Caco-2 (cell line): ENCODE measurements at regions of chr19 and their contacts with region 1.

Region 1: DNA sequence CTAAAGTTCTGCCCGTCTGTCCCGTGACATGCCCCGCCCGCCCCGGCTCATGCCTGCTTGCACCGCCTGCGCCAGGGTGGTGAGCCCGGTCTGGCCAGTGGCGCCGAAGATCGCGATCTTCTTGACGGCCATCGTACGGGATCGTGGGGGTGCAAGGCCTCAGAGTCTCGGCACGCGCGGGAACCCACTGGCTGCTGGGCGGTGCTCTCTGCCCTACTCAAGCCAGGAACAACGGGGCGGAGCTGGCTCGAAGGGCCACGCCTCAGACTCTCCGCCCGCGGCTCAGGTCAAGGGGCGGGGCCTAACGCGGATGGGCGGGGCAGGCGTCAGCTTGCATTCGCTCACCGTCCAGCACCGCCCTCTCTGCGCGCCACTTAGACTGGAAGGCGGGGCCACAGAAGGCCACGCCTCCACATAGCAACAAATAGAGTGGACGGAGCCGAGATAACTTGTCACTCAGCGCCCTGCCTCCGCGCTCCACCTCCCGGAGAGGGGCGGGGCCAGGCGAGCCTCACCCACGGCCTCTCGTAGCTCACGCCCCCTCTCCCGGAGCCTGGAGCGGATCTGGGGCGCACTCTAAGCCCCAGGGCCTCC is at the start of gene BLVRB:
- DNase-seq: peak; percentile 99 to 100
- H3K4me3 ChIP-seq: peak within 1 kb of the TSS; percentile 73
- H3K4me3 Mint-ChIP-seq: peak within 1 kb of the TSS; percentile 79
- H3K27ac Mint-ChIP-seq: peak within 1 kb of the TSS; percentile 92
- H3K4me1 ChIP-seq: peaks cover 20% of the 10 kb centered on the region
- H3K4me1 Mint-ChIP-seq: peaks cover 20% of the 10 kb centered on the region
- H3K27me3 ChIP-seq: no peaks in the 10 kb centered on the region
- H3K27me3 Mint-ChIP-seq: peaks cover 4% of the 10 kb centered on the region
- CTCF ChIP-seq: no peak
- total RNA-seq, gene BLVRB: 75.2 and 101 TPM in 2 replicates

Region 2: DNA sequence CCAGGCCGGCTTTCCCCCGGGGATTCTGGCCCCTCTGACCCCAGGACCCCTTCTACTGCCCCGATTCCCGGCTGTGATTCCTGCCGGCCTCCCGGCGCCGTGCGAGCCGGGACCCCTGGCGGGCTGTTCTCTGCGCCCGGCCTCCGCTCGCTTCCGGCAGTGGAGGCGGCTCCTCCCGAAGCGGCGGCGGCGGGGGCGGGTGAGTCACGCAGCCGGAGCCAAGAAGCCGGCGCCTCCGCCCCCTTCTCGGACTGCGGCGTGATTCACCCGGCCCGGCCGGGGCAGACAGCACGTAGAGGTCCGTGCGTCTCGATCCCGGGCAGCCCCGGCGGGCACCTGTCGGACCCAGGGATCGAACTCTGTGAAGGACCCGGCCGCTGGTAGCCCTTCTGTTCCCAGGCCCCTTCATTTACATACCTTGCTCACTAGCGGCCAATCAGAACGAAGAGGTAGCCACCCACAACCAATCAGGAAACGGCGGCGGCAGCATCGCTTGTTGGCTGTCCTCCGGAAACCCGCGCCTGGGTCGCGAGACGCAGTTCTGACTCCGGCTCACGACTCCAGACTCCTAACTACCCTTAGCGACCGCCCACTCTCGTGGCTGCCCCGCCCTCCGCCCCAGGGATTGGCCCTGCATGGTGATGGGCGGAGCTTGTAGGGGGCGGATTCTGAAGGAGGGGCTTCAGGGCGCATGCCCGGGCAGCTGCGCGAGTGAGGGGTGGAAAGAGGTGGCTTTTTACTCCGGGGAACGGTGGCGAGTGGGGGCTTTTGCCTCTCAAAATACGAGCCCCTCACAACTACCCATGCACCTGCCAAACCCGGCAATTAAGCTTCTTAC is 40.0 kb before region 1 on chr19 and contains the start of gene SERTAD1:
- CTCF ChIA-PET with region 1: interaction called, 24 read pairs
- POLR2A ChIA-PET with region 1: interaction called, 17 read pairs
- intact Hi-C with region 1: loop called (anchors 1 kb)
- DNase-seq: peak; percentile 100
- H3K4me3 ChIP-seq: peak within 1 kb of the TSS; percentile 46
- H3K4me3 Mint-ChIP-seq: peak within 1 kb of the TSS; percentile 93
- H3K27ac Mint-ChIP-seq: peak within 1 kb of the TSS; percentile 90
- H3K4me1 ChIP-seq: no peaks in the 10 kb centered on the region
- H3K4me1 Mint-ChIP-seq: peaks cover 8% of the 10 kb centered on the region
- H3K27me3 ChIP-seq: no peaks in the 10 kb centered on the region
- H3K27me3 Mint-ChIP-seq: no peaks in the 10 kb centered on the region
- CTCF ChIP-seq: peak; percentile 91 to 95
- total RNA-seq, gene SERTAD1: 7.7 and 8.6 TPM in 2 replicates

Region 3: GRCh38 chr19:40452016-40452415 is 13.6 kb before region 1 on chr19:
- CTCF ChIA-PET with region 1: interaction called, 34 read pairs
- POLR2A ChIA-PET with region 1: interaction called, 26 read pairs
- intact Hi-C with region 1: loop called (anchors 1 kb)
- DNase-seq: no peak
- H3K4me3 ChIP-seq: no peak overlapping the region
- H3K4me3 Mint-ChIP-seq: no peak overlapping the region
- H3K27ac Mint-ChIP-seq: peak overlapping the region; percentile 84
- H3K4me1 ChIP-seq: peaks cover 18% of the 10 kb centered on the region
- H3K4me1 Mint-ChIP-seq: peaks cover 17% of the 10 kb centered on the region
- H3K27me3 ChIP-seq: no peaks in the 10 kb centered on the region
- H3K27me3 Mint-ChIP-seq: no peaks in the 10 kb centered on the region
- CTCF ChIP-seq: no peak

Region 4: GRCh38 chr19:40529093-40529954 is 63.7 kb after region 1 on chr19:
- CTCF ChIA-PET with region 1: interaction called, 3 read pairs
- POLR2A ChIA-PET with region 1: no interaction called
- intact Hi-C with region 1: loop called (anchors 5 kb)
- DNase-seq: peak; percentile 85 to 91
- H3K4me3 ChIP-seq: peak overlapping the region; percentile 49
- H3K4me3 Mint-ChIP-seq: peak overlapping the region; percentile 72
- H3K27ac Mint-ChIP-seq: peak overlapping the region; percentile 19
- H3K4me1 ChIP-seq: peaks cover 12% of the 10 kb centered on the region
- H3K4me1 Mint-ChIP-seq: peaks cover 7% of the 10 kb centered on the region
- H3K27me3 ChIP-seq: no peaks in the 10 kb centered on the region
- H3K27me3 Mint-ChIP-seq: no peaks in the 10 kb centered on the region
- CTCF ChIP-seq: peak; percentile 94 to 98

Region 5: GRCh38 chr19:40603389-40604135 is 137.9 kb after region 1 on chr19:
- CTCF ChIA-PET with region 1: interaction called, 8 read pairs
- POLR2A ChIA-PET with region 1: interaction called, 4 read pairs
- intact Hi-C with region 1: loop called (anchors 5 kb)
- DNase-seq: peak; percentile 100
- H3K4me3 ChIP-seq: peak overlapping the region; percentile 24
- H3K4me3 Mint-ChIP-seq: peak overlapping the region; percentile 87
- H3K27ac Mint-ChIP-seq: peak overlapping the region; percentile 72
- H3K4me1 ChIP-seq: peaks cover 54% of the 10 kb centered on the region
- H3K4me1 Mint-ChIP-seq: peaks cover 52% of the 10 kb centered on the region
- H3K27me3 ChIP-seq: no peaks in the 10 kb centered on the region; the same call in 1 of the 2 replicates
- H3K27me3 Mint-ChIP-seq: peaks cover 11% of the 10 kb centered on the region
- CTCF ChIP-seq: peak in 1 of 2 experiments; percentile 12